Sigmoid colon (tissue), 7 donors: ENCODE measurements at regions of chr19 and their contacts with region 1.

Region 1: DNA sequence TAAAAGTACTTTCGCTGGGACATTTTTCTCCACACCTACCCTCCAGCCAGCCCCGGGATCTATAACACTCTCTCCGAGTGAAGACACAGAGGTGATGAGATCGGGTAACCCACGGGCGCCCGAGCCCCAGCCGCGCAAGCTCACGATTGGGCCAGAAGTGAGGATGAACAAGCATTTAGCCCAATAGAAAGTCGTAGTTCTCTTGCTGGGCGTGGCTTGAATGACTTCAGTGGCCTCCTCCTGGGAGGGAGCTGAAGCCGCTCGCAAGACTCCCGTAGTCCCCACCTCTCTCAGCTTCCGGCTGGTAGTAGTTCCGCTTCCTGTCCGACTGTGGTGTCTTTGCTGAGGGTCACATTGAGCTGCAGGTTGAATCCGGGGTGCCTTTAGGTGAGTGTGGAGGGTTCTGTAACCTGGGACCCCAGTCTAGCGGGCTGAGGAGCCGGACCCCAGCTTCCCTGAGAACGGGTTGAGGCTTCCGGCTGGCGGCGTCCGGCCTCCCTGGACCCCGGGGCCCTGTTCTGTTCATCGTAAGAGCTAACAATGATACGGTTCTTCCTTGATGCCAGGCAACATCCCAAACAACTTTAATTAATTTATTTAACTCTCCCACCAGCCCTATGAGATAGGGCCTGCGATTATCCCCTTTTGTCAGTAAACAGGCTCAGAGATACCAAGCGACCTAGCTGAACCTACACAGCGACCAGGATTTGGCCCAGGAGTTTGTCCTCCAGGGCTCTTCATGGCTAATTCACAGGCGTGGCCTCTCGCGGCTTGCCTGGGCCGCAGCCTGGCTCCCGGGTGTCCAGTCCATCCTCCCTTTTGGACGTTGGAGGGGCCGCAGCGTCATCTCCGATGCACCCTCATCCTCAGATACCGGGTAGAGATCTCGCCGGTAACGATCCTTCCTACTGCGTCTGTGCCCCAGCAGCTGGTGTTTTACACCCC is at the start of gene COX6B1:
- DNase-seq: peak; percentile 98
- H3K4me3 ChIP-seq: peak within 1 kb of the TSS; percentile 63 to 87 (median 81)
- H3K27ac ChIP-seq: peak within 1 kb of the TSS; percentile 85 to 96 (median 91)
- H3K4me1 ChIP-seq: peaks cover 0 to 53% (median 41%) of the 10 kb centered on the region in 4 donors
- H3K27me3 ChIP-seq: no peaks in the 10 kb centered on the region
- CTCF ChIP-seq: no peak
- EP300 ChIP-seq: peak in 1 of 4 donors; percentile 7
- POLR2A ChIP-seq: peak; percentile 67 to 86
- total RNA-seq, gene COX6B1: 593 to 780 (median 696) TPM

Region 2: GRCh38 chr19:34677386-34678084 is 970.8 kb before region 1 on chr19 and contains the start of gene ZNF302:
- intact Hi-C with region 1: loop called (anchors 10 kb)
- DNase-seq: peak; percentile 98
- H3K4me3 ChIP-seq: peak within 1 kb of the TSS; percentile 64 to 91 (median 88)
- H3K27ac ChIP-seq: peak within 1 kb of the TSS; percentile 97 to 99 (median 98)
- H3K4me1 ChIP-seq: peaks cover 0 to 27% (median 12%) of the 10 kb centered on the region in 4 donors
- H3K27me3 ChIP-seq: no peaks in the 10 kb centered on the region
- CTCF ChIP-seq: no peak
- EP300 ChIP-seq: peak in 1 of 4 donors; percentile 26
- POLR2A ChIP-seq: peak; percentile 36 to 63
- total RNA-seq, gene ZNF302: 22.7 to 40.6 (median 37.0) TPM

Region 3: DNA sequence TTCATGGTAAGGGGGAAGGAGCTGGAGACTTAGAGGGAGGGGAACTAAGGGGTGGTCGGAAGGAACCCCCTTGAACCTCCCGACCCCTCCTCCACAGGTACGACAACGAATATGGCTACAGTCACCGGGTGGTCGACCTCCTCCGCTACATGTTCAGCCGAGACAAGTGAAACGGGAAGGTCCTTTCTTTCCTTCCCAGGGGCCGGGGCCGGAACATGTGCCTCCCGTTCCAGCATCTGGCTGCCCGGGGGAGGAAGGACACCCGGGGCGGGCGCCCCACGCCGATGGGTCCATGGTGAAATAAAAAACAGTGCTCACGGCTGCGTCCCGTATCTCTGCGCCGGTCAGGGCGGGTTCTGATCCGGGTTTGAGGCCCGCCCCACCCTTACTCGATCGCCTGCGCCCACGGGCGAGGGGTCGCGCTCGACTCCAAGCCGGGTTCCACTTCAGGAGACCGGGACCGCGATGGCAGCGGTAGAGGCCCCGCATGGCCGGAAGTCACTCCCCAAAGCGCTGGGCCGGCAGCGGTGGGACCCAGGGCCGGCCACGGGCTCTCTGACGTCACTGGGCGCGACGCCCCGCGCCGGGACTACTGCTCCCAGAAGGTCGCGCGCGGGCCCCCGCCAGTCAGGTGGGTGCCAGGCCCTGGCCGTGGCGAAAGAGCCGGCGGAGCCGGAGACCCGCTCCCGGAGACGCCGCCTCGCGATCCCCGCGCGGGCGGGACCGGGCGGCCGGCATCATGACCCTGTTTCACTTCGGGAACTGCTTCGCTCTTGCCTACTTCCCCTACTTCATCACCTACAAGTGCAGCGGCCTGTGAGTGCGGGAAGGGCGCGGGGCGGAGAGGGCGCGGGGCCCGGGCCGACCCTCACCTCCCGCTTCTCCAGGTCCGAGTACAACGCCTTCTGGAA is 103.0 kb before region 1 on chr19 and contains the start of gene TMEM147:
- intact Hi-C with region 1: loop called (anchors 5 kb)
- DNase-seq: peak; percentile 96
- H3K4me3 ChIP-seq: peak within 1 kb of the TSS; percentile 68 to 97 (median 90)
- H3K27ac ChIP-seq: peak within 1 kb of the TSS; percentile 79 to 90 (median 88)
- H3K4me1 ChIP-seq: peaks cover 0 to 29% (median 26%) of the 10 kb centered on the region in 4 donors
- H3K27me3 ChIP-seq: no peaks in the 10 kb centered on the region
- CTCF ChIP-seq: no peak
- EP300 ChIP-seq: peak in 1 of 4 donors; percentile 59
- POLR2A ChIP-seq: peak in 1 of 2 donors; percentile 23
- total RNA-seq, gene TMEM147: 60.1 to 72.5 (median 69.3) TPM

Region 4: GRCh38 chr19:35608251-35608650 is 40.0 kb before region 1 on chr19:
- intact Hi-C with region 1: no loop called
- DNase-seq: no peak
- H3K4me3 ChIP-seq: no peak overlapping the region
- H3K27ac ChIP-seq: no peak overlapping the region
- H3K4me1 ChIP-seq: peaks cover 0 to 13% (median 9%) of the 10 kb centered on the region in 4 donors
- H3K27me3 ChIP-seq: no peaks in the 10 kb centered on the region
- CTCF ChIP-seq: no peak
- EP300 ChIP-seq: no peak
- POLR2A ChIP-seq: no peak

Region 5: DNA sequence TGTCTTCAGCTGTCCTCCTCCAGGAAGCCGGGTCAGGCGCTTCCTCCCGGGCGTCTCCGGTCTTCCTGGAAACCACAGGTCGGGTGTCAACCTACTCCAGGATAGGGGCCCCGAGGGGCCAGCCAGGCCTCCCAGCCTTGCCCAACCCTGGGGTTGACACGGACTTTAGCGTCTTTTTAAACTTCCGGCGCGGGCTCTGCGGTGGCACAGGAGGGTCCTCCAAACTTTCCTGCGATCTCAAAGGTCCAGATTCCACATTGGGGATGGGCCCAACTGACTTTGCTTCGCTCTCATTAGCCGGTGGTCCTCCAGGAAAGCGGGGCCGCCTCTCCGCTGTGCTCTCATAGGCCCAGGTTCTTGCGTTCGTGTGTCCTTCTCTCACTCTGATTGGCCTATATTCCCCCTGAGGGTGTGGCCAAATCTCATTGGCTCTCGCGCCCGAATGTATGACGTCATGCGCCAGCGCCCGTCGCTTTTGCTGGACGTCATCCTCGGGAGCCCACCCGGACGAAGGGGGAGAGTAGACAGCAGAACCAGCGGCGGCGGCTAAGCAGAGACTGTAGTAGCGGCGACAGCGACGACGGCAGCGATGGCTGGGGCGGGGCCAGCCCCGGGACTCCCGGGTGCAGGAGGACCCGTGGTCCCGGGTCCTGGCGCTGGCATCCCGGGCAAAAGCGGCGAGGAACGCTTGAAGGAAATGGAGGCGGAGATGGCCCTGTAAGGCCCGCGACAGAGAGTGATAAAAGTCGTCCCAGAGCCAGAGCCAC is 19.5 kb before region 1 on chr19 and contains the start of gene RBM42:
- intact Hi-C with region 1: loop called (anchors 2 kb)
- DNase-seq: peak; percentile 99
- H3K4me3 ChIP-seq: peak within 1 kb of the TSS; percentile 70 to 99 (median 86)
- H3K27ac ChIP-seq: peak within 1 kb of the TSS; percentile 90 to 98 (median 94)
- H3K4me1 ChIP-seq: peaks cover 0 to 22% (median 18%) of the 10 kb centered on the region in 4 donors
- H3K27me3 ChIP-seq: no peaks in the 10 kb centered on the region
- CTCF ChIP-seq: no peak
- EP300 ChIP-seq: peak in 2 of 4 donors; percentile 21 to 31
- POLR2A ChIP-seq: peak; percentile 55 to 66
- total RNA-seq, gene RBM42: 43.5 to 61.2 (median 53.2) TPM

Region 6: GRCh38 chr19:35702223-35703012 is 54.1 kb after region 1 on chr19:
- intact Hi-C with region 1: loop called (anchors 5 kb)
- DNase-seq: peak; percentile 98
- H3K4me3 ChIP-seq: peak overlapping the region; percentile 48 to 64 (median 53)
- H3K27ac ChIP-seq: peak overlapping the region in 3 of 4 donors; percentile 34 to 59 (median 44)
- H3K4me1 ChIP-seq: peaks cover 0 to 12% (median 12%) of the 10 kb centered on the region in 4 donors
- H3K27me3 ChIP-seq: peaks cover 0 to 20% (median 0%) of the 10 kb centered on the region in 3 donors
- CTCF ChIP-seq: no peak
- EP300 ChIP-seq: no peak
- POLR2A ChIP-seq: no peak

Region 7: GRCh38 chr19:35757749-35758608 is 109.7 kb after region 1 on chr19 and contains the start of gene PROSER3:
- intact Hi-C with region 1: loop called (anchors 5 kb)
- DNase-seq: peak; percentile 100
- H3K4me3 ChIP-seq: peak within 1 kb of the TSS; percentile 79 to 86 (median 83)
- H3K27ac ChIP-seq: peak within 1 kb of the TSS; percentile 98 to 99 (median 99)
- H3K4me1 ChIP-seq: peaks cover 0 to 63% (median 49%) of the 10 kb centered on the region in 4 donors
- H3K27me3 ChIP-seq: no peaks in the 10 kb centered on the region
- CTCF ChIP-seq: no peak
- EP300 ChIP-seq: no peak
- POLR2A ChIP-seq: peak; percentile 72 to 83
- total RNA-seq, gene PROSER3: 2.9 to 6.1 (median 5.2) TPM

Region 8: DNA sequence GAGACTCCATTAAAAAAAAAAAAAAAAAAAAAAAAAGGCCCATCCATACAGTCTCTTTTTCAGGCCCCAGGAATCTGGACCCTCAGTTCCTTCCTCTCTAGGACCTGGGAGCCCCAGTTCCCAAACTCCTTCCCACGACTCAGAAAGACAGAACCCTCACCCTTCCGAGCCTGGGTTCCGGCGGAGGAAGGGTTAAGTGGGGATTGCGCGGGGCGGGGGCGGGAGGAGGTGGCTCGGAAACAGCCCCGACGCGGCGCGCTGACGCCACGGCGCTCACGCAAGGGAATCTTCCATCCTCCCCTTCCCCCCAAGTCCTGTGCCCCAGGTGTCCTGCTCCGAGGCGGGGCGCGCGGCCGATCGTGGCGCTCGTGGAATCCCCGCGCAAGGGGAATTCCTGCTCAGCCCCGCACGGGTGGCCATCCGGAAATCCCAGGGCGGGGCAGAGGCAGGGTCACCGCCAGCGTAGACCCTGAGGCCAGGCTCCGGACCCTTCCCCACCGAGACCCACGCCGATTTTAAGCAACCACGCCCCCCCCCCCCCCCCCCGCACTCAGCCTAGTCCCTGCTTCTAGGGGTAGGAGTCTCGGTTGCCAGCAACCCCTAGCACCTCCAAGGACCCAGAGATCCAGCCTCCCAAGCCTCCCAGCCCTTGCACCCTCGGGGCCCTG is 251.4 kb after region 1 on chr19:
- intact Hi-C with region 1: loop called (anchors 5 kb)
- DNase-seq: peak; percentile 92
- H3K4me3 ChIP-seq: peak overlapping the region; percentile 54 to 74 (median 62)
- H3K27ac ChIP-seq: peak overlapping the region; percentile 82 to 95 (median 90)
- H3K4me1 ChIP-seq: peaks cover 0 to 34% (median 25%) of the 10 kb centered on the region in 4 donors
- H3K27me3 ChIP-seq: no peaks in the 10 kb centered on the region
- CTCF ChIP-seq: no peak
- EP300 ChIP-seq: peak in 2 of 4 donors; percentile 7 to 78
- POLR2A ChIP-seq: peak in 1 of 2 donors; percentile 64